H1 (cell line): ENCODE measurements at regions of chr4 and their contacts with region 1.

Region 1: DNA sequence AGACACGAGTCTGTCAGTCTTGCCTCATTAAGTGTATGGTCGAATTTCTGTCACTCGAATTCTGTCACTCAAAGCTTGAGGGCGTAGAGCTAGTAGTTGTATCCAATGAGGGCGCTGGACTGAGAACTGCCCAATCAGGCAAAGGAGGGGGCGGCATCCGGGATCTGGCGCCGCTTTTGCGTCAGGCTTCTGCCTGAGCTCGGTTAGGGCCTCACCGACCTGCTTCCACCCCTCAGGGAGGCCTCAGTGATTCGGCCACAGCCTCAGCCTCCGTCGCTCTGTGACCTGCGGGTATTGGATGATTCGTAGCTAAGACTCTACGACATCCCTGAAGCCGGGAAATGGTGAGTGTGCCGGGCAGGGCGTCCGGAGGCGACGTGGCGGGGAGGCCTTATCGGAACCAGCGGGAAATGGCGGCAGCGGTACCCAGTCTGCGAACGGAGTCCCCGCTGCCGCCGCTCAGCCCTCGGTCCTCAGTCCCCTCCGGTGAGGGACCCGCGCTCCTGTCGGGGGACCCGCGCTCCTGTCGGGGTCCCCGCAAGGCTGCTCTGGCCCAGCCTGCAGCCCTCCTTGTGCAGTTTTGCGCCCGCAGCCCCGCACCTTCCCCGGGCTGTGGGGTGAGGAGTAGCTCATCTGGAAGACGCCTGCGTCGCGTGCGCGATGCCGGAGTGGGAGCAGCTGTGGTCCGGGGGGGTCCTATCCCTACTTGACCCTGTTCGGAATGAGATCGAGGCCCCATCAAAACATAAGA is 88.3 kb downstream of the ZNF718 start:
- DNase-seq: peak in 1 of 2 experiments; percentile 73
- H3K4me3 ChIP-seq: peak overlapping the region; percentile 86 to 91 (median 87)
- H3K27ac ChIP-seq: peak overlapping the region; percentile 91
- H3K4me1 ChIP-seq: peaks cover 2 to 5% (median 5%) of the 10 kb centered on the region in 4 experiments; a peak in 5 of 7 replicates
- H3K27me3 ChIP-seq: no peaks in the 10 kb centered on the region
- CTCF ChIP-seq: no peak
- EP300 ChIP-seq: no peak
- POLR2A ChIP-seq: peak; percentile 74 to 97
- RAD21 ChIP-seq: no peak

Region 2: GRCh38 chr4:99863-100262 is 112.8 kb before region 1 on chr4:
- CTCF ChIA-PET with region 1: no interaction called
- POLR2A ChIA-PET with region 1: no interaction called
- DNase-seq: no peak
- H3K4me3 ChIP-seq: no peak overlapping the region
- H3K27ac ChIP-seq: no peak overlapping the region
- H3K4me1 ChIP-seq: 0 out of 7 replicates have a peak, but pooled peaks cover 0 to 2% (median 0%) of the 10 kb centered on the region in 4 experiments
- H3K27me3 ChIP-seq: peaks cover 0 to 2% (median 0%) of the 10 kb centered on the region in 4 experiments; a peak in 1 of 7 replicates
- CTCF ChIP-seq: no peak
- EP300 ChIP-seq: no peak
- POLR2A ChIP-seq: no peak
- RAD21 ChIP-seq: no peak

Region 3: DNA sequence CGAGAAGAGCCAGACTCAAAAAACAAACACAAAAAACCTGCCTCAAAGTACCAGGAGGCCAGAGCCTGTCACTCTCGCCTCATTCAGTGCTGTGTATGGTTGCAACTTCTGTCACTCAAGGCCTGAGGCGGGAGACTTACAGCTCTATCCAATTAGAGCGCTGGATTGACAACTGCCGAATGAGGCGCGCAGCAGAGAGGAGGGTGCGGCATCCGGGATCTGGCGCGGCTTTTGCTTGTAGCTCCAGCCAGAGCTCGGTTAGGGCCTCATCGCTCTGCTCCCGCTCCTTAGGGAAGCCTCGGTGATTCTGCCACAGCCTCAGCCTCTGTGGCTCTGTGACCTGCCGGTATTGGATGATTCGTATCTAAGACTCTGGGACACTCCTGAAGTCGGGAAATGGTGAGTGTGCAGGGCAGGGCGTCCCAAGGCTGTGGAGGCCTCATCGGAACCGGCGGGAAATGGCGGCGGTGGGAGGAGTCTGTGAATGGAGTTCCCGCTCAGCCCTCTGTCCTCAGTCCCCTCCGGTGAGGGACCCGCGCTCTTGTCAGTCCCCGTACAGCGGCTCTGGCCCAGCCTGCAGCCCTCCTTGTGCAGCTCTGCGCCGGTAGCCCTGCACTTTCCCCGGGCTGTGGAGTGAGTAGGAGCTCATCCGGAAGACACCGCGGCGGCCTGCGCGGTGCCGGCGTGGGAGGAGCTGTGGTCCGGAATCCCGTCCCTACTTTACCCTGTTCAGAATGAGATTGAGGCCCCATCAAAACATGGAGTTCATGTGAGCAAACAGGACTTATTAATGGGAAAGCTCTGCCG is 88.1 kb before region 1 on chr4 and contains the start of gene ZNF718:
- CTCF ChIA-PET with region 1: no interaction called
- POLR2A ChIA-PET with region 1: interaction called, 36 read pairs
- DNase-seq: peak; percentile 92 to 94
- H3K4me3 ChIP-seq: peak within 1 kb of the TSS; percentile 78 to 98 (median 94)
- H3K27ac ChIP-seq: peak within 1 kb of the TSS; percentile 92
- H3K4me1 ChIP-seq: peaks cover 0 to 2% (median 0%) of the 10 kb centered on the region in 4 experiments; a peak in 3 of 7 replicates
- H3K27me3 ChIP-seq: no peaks in the 10 kb centered on the region
- CTCF ChIP-seq: no peak
- EP300 ChIP-seq: no peak
- POLR2A ChIP-seq: peak; percentile 99
- RAD21 ChIP-seq: no peak
- total RNA-seq, gene ZNF718: 19.4 and 19.5 TPM in 2 replicates

Region 4: GRCh38 chr4:173671-174332 is 38.8 kb before region 1 on chr4:
- CTCF ChIA-PET with region 1: interaction called, 3 read pairs
- POLR2A ChIA-PET with region 1: interaction called, 16 read pairs
- DNase-seq: peak in 1 of 2 experiments; percentile 23
- H3K4me3 ChIP-seq: no peak overlapping the region
- H3K27ac ChIP-seq: no peak overlapping the region
- H3K4me1 ChIP-seq: 0 out of 7 replicates have a peak, but pooled peaks cover 0 to 3% (median 0%) of the 10 kb centered on the region in 4 experiments
- H3K27me3 ChIP-seq: no peaks in the 10 kb centered on the region; a peak in 1 of 7 replicates
- CTCF ChIP-seq: no peak
- EP300 ChIP-seq: no peak
- POLR2A ChIP-seq: no peak
- RAD21 ChIP-seq: no peak

Region 5: GRCh38 chr4:234178-234577 is 21.6 kb after region 1 on chr4:
- CTCF ChIA-PET with region 1: interaction called, 3 read pairs
- POLR2A ChIA-PET with region 1: interaction called, 12 read pairs
- DNase-seq: no peak
- H3K4me3 ChIP-seq: no peak overlapping the region
- H3K27ac ChIP-seq: no peak overlapping the region
- H3K4me1 ChIP-seq: 0 out of 7 replicates have a peak, but pooled peaks cover 0 to 2% (median 0%) of the 10 kb centered on the region in 4 experiments
- H3K27me3 ChIP-seq: no peaks in the 10 kb centered on the region
- CTCF ChIP-seq: peak in 1 of 3 experiments; percentile 18; a peak in 1 of 4 replicates
- EP300 ChIP-seq: no peak
- POLR2A ChIP-seq: no peak
- RAD21 ChIP-seq: peak; percentile 7 to 8; a peak in 1 of 4 replicates

Region 6: DNA sequence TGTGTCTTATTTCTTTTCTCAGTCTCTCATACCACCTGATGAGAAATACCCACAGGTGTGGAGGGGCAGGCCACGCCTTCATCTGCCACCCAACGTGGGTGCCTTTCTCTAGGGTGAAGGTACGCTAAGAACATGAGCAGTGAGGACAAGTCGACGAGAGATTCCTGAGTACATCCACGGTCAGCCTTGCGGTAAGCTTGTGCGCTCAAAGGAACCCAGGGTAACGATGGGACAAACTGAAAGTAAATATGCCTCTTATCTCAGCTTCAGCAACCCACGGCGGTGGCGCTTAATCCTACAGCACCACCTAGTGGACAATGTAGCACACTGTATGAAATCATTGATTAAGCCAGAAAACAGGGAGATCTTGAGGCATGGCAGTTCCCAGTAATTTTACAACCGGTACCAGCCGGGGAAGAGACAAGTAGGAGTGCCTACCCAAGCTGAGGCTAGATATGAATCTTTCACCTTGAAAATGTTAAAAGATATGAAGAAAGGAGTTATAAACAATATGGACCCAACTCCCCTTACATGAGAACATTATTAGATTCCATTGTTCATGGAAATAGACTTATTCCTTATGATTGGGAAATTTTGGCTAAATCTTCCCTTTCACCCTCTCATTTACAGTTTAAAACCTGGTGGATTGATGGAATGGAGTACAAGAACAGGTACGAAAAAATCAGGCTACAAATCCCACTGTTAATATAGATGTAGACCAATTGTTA is 29.7 kb after region 1 on chr4:
- CTCF ChIA-PET with region 1: interaction called, 15 read pairs
- POLR2A ChIA-PET with region 1: interaction called, 21 read pairs
- DNase-seq: peak; percentile 58 to 62
- H3K4me3 ChIP-seq: peak overlapping the region in 1 of 4 experiments; percentile 16; a peak in 2 of 8 replicates
- H3K27ac ChIP-seq: no peak overlapping the region
- H3K4me1 ChIP-seq: no peaks in the 10 kb centered on the region
- H3K27me3 ChIP-seq: no peaks in the 10 kb centered on the region
- CTCF ChIP-seq: peak; percentile 36 to 80 (median 80)
- EP300 ChIP-seq: no peak
- POLR2A ChIP-seq: no peak
- RAD21 ChIP-seq: peak; percentile 92 to 94